ENCODE measurements at regions of chr5 and their contacts with region 1.

Region 1: DNA sequence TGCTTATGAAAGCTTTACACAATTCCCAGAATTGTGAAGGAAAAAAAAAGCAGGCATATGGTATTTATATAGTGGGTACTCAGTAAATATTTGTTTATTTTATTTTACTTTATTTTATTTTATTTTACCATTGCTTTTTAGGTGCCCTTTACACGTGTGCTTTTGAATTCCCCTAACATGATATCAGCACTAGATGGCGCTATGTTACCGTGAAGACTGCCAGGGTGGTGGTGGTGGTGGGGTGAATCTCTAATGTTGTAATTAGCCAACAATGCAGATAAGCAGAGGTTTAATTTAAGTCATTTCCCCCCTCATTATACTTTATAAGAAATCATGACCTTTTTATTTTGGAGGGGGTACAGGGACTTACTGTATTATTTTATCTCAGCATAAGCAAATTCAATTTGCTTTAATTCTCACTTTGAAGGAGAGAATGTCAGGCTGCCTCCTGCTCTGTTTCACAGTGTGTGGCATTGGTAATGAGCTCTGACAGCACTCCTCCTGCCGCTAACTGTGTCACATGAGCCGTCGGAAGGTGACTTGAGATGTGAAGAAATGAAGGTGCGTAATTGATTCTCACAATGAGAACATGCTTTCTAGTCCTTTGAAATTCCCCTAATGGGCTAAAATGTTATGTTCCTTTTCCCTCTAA is 165.6 kb downstream of the YTHDC2 start:
- DNase-seq: peak; percentile 50
- ATAC-seq: peak; percentile 95
- H3K4me3 ChIP-seq: no peak overlapping the region
- H3K27ac ChIP-seq: no peak overlapping the region
- H3K4me1 ChIP-seq: no peaks in the 10 kb centered on the region
- H3K27me3 ChIP-seq: no peaks in the 10 kb centered on the region
- CTCF ChIP-seq: peak; percentile 74 to 80 (median 78); a peak in 5 of 6 replicates
- POLR2A ChIP-seq: no peak
- RAD21 ChIP-seq: peak; percentile 91

Region 2: DNA sequence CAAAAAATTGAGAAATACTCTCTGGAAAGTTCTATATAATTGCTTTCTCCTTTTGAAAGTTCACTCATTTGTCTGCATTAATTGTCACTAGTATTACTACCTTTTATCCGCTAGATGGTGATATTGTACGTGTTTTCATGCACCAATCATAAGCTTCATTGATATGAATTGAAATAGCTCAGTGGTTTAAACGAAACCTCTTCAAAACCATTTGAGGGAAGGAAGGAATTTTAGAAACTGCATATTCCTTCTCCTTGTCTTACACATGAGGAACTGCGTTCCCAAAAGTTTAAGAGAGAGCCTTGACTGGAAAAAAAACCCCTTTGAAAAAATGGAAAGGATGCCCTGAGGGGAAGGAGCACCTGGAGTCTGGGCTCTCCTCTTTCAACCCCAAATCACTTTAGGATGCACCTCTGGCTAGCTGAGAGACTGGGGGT is 67.0 kb before region 1 on chr5:
- CTCF ChIA-PET with region 1: interaction called, 7 read pairs
- POLR2A ChIA-PET with region 1: no interaction called
- RAD21 ChIA-PET with region 1: interaction called in 1 of 2 experiments, 3 read pairs
- intact Hi-C with region 1: loop called (anchors 5 kb)
- DNase-seq: peak; percentile 13
- ATAC-seq: peak; percentile 82
- H3K4me3 ChIP-seq: no peak overlapping the region
- H3K27ac ChIP-seq: no peak overlapping the region
- H3K4me1 ChIP-seq: peaks cover 0 to 5% of the 10 kb centered on the region in 2 experiments; a peak in 1 of 4 replicates
- H3K27me3 ChIP-seq: no peaks in the 10 kb centered on the region
- CTCF ChIP-seq: peak; percentile 22 to 73 (median 54); a peak in 4 of 6 replicates
- POLR2A ChIP-seq: no peak
- RAD21 ChIP-seq: peak; percentile 78

Region 3: DNA sequence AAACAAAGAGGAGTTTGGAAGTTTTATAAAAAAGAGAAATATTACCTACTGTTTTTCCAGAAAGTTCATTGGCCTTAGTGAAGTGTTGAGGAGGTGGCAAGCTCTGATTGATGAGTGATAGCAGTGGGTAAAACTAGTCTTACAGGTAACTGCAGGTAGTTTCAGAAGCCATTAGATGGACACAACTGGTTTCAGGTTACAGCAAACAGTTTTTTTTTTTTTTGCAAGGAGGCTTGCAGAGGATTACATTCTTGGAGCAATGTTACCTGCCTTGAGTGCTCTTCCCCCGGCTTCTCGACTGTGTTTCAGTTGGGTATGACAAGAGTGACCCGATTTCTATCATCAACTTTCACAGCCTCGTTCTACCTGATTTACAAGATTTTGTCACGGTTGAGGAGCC is 167.9 kb after region 1 on chr5:
- CTCF ChIA-PET with region 1: no interaction called
- POLR2A ChIA-PET with region 1: no interaction called
- RAD21 ChIA-PET with region 1: no interaction called
- intact Hi-C with region 1: no loop called
- DNase-seq: no peak
- ATAC-seq: no peak
- H3K4me3 ChIP-seq: no peak overlapping the region
- H3K27ac ChIP-seq: no peak overlapping the region
- H3K4me1 ChIP-seq: no peaks in the 10 kb centered on the region
- H3K27me3 ChIP-seq: 0 out of 2 replicates have a peak, but pooled peaks cover 3% of the 10 kb centered on the region
- CTCF ChIP-seq: no peak
- POLR2A ChIP-seq: no peak
- RAD21 ChIP-seq: no peak

Region 4: GRCh38 chr5:114101153-114101552 is 422.1 kb after region 1 on chr5:
- CTCF ChIA-PET with region 1: interaction called, 3 read pairs
- POLR2A ChIA-PET with region 1: no interaction called
- RAD21 ChIA-PET with region 1: no interaction called
- intact Hi-C with region 1: loop called (anchors 10 kb)
- DNase-seq: peak; percentile 26
- ATAC-seq: peak; percentile 80
- H3K4me3 ChIP-seq: no peak overlapping the region
- H3K27ac ChIP-seq: no peak overlapping the region
- H3K4me1 ChIP-seq: no peaks in the 10 kb centered on the region
- H3K27me3 ChIP-seq: 0 out of 2 replicates have a peak, but pooled peaks cover 8% of the 10 kb centered on the region
- CTCF ChIP-seq: peak; percentile 44 to 50 (median 48); a peak in 4 of 6 replicates
- POLR2A ChIP-seq: no peak
- RAD21 ChIP-seq: peak; percentile 62

Region 5: DNA sequence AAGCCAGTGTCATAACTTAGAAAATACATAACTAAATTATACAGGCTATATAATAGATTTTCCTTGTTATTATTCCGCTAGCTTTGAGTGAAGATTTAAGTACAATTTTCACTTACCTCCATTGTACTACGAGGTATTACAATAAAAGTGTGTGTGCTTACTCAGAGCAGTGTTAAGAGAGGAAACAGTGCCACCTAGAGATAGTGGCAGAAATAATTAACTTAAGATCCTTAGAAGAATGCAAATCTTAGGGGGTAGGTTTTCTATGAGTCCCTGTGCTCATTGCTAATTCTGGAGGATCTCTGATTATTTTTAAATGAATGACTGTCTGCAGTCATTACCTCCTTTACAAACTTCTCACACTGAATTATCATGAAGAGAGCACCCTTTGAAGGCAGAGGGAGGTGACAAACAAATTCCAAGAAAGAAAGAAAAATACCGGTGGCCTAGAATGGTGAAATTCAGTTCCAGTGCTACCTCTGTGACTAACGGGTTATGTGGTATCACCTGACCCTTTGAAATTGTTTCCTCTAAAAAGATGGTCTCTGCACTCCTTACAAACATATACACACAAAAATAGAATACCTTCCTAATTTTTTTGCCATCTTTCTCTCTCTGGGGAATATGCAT is 1110.8 kb after region 1 on chr5:
- CTCF ChIA-PET with region 1: no interaction called
- POLR2A ChIA-PET with region 1: no interaction called
- RAD21 ChIA-PET with region 1: no interaction called
- intact Hi-C with region 1: loop called (anchors 5 kb)
- DNase-seq: peak; percentile 34
- ATAC-seq: peak; percentile 84
- H3K4me3 ChIP-seq: no peak overlapping the region
- H3K27ac ChIP-seq: no peak overlapping the region
- H3K4me1 ChIP-seq: no peaks in the 10 kb centered on the region
- H3K27me3 ChIP-seq: peaks cover 51% of the 10 kb centered on the region
- CTCF ChIP-seq: peak; percentile 38 to 63 (median 39); a peak in 5 of 6 replicates
- POLR2A ChIP-seq: no peak
- RAD21 ChIP-seq: peak; percentile 66

Measured in HCT116 (cell line).